Right ventricle myocardium superior (tissue), 1 donor: ENCODE measurements at regions of chrX and their contacts with region 1.

Region 1: DNA sequence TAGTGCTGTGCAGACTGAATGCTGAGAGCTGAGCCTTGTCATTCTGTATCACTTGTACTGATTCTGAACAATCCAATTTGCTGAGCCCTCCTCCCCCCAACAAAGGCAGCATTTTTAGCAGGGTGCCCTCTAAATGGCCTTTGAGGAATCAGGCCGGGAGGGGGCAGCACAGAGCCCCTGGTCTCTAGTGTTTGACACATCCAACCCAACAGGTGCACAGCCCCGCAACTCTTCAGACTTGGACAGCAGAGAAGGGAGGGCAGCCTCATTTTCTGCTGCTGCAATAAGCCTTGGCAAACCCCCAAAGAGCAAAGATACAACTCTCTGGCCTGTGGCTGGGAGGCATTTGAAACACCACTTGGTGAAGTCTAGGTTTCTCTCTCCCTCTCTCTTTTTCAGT is 3.4 kb downstream of the ATP1B4 start:
- DNase-seq: peak; percentile 61
- ATAC-seq: peak; percentile 62

Region 2: DNA sequence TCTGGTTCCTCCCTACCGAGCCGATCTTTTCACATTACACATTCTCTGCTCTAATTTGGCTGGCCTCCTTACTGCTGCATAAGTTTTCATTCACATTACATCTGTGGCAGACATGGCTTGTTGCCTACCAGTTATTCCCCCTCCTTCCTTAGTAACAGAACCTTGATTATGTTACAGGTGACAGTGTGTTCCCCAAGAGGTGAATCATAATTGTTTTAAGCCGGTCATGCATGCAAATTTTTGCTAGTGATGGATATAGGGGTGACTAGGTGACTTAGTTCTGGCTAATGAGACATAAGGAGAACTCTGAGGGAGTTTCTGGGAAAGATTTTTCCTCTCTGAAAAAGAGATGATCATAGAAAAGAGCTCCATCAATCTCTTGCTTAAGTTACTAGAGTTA is 112.1 kb after region 1 on chrX:
- intact Hi-C with region 1: loop called (anchors 10 kb)
- DNase-seq: no peak
- ATAC-seq: no peak

Region 3: DNA sequence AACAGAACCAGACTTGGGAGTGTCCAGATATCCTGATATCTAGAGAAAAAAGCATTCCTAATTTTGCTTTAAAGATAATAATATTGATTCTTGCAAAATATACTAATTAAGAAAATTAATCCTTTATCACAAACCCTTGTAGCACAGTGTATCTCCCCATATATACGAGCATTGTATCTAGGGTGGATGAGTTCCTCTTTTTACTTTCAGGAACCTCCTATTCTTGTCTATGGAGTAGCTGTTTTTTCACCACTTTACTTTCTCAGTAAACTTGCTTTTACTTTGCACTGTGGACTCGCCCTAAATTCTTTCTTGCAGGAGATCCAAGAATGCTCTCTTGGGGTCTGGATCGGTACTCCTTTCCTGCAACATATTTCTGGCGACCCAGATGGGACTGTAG is 786.0 kb after region 1 on chrX:
- intact Hi-C with region 1: no loop called
- DNase-seq: no peak
- ATAC-seq: no peak